Activated CD8-positive, alpha-beta memory T cell treated with anti-CD3 and anti-CD28 coated beads, Interleukin-2, amount 10 ng/mL, durations not matched to agents 7 days and 5 days (primary cell): ENCODE measurements at regions of chr2 and their contacts with region 1.

Region 1: DNA sequence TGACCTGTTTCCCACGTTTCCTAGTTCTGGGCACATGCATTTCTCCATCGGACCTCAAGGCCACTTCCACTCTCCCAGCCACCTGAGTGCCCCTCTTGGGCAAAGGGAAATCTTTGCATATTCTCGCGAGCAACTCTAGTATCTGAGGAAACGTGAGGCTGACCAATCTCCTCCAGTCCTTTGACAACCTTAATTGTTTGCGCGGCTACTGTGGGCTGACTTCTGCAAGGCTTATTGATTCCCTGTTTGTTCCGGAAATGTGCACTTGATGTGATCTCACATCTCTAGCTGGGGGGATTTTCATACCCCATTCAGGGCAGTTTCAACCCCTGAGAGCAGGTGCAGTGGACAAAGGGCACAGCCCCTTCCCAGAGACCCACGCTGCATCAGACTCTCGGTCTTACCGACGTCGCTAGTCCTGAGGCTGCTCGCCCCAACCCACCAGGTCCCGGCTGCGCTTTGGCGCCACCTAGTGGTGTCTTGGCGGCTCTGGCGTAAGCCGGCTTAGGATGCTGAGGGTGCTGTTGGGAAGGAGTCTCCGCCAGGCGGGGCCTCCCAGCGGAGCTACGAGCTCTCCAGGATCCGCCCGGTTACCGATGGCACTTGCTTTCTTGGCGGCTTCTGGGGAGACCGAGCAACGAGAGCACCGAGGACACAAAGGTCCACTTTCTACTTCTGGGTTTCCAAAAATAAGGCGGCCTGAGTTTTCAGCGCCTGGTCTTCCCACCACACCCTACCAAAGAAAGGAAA is 24.8 kb upstream of the SPR start:
- DNase-seq: peak; percentile 90
- ATAC-seq: peak; percentile 98
- H3K4me3 Mint-ChIP-seq: peak overlapping the region; percentile 64
- H3K27ac Mint-ChIP-seq: no peak overlapping the region
- H3K4me1 Mint-ChIP-seq: peaks cover 21% of the 10 kb centered on the region
- H3K27me3 Mint-ChIP-seq: peaks cover 64% of the 10 kb centered on the region

Region 2: DNA sequence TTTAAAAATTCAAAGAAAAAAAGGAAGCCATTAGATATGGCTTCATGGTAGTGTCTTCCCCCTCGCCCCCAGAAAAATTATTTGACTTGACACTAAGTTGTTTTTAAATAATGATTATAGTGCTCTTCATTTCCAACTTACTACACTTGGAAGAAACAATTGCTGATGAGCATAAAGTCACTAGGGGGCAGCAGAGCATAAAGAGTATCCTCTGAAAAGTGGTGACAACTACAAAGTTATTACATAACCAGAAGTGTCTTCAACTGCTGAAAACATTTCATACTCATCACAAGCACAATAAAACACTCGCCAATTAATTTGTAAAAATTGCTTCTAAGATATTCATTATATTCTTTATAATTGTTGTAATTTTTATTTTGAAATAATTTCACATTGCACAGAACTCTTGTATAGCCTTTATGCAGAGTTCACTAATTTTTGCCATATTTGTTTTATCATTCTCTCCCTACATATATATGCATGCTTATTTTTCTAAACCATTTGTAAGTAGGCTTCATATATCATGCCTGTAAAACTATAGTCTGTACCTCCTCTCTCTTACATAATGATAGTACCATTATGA is 91.4 kb before region 1 on chr2:
- CTCF ChIA-PET with region 1: interaction called, 24 read pairs
- DNase-seq: peak; percentile 71
- ATAC-seq: peak; percentile 64
- H3K4me3 Mint-ChIP-seq: no peak overlapping the region
- H3K27ac Mint-ChIP-seq: no peak overlapping the region
- H3K4me1 Mint-ChIP-seq: no peaks in the 10 kb centered on the region
- H3K27me3 Mint-ChIP-seq: no peaks in the 10 kb centered on the region

Region 3: GRCh38 chr2:72953976-72954375 is 91.6 kb after region 1 on chr2:
- CTCF ChIA-PET with region 1: no interaction called
- DNase-seq: peak; percentile 87
- ATAC-seq: peak; percentile 98
- H3K4me3 Mint-ChIP-seq: peak overlapping the region; percentile 86
- H3K27ac Mint-ChIP-seq: peak overlapping the region; percentile 90
- H3K4me1 Mint-ChIP-seq: peaks cover 28% of the 10 kb centered on the region
- H3K27me3 Mint-ChIP-seq: no peaks in the 10 kb centered on the region

Region 4: GRCh38 chr2:73081181-73081671 is 218.8 kb after region 1 on chr2:
- CTCF ChIA-PET with region 1: no interaction called
- DNase-seq: no peak
- ATAC-seq: no peak
- H3K4me3 Mint-ChIP-seq: no peak overlapping the region
- H3K27ac Mint-ChIP-seq: no peak overlapping the region
- H3K4me1 Mint-ChIP-seq: no peaks in the 10 kb centered on the region
- H3K27me3 Mint-ChIP-seq: no peaks in the 10 kb centered on the region